B cell (primary cell): ENCODE measurements at regions of chr14 and their contacts with region 1.

Region 1: GRCh38 chr14:68359837-68360552 is 432.9 kb downstream of the ZFP36L1 start:
- DNase-seq: peak; percentile 35
- ATAC-seq: no peak
- H3K4me3 ChIP-seq: peak overlapping the region in 1 of 5 experiments; percentile 6
- H3K4me3 Mint-ChIP-seq: peak overlapping the region; percentile 72
- H3K27ac ChIP-seq: peak overlapping the region; percentile 66 to 71
- H3K27ac Mint-ChIP-seq: peak overlapping the region; percentile 95
- H3K4me1 ChIP-seq: peaks cover 56 to 62% of the 10 kb centered on the region in 2 donors
- H3K4me1 Mint-ChIP-seq: peaks cover 66% of the 10 kb centered on the region
- H3K27me3 ChIP-seq: no peaks in the 10 kb centered on the region
- H3K27me3 Mint-ChIP-seq: no peaks in the 10 kb centered on the region
- CTCF ChIP-seq: no peak

Region 2: GRCh38 chr14:68274725-68275124 is 85.3 kb before region 1 on chr14:
- CTCF ChIA-PET with region 1: interaction called, 3 read pairs
- POLR2A ChIA-PET with region 1: interaction called, 11 read pairs
- intact Hi-C with region 1: loop called (anchors 5 kb)
- DNase-seq: peak; percentile 55
- ATAC-seq: no peak
- H3K4me3 ChIP-seq: peak overlapping the region in 1 of 5 experiments; percentile 12
- H3K4me3 Mint-ChIP-seq: peak overlapping the region; percentile 80
- H3K27ac ChIP-seq: peak overlapping the region; percentile 88 to 91
- H3K27ac Mint-ChIP-seq: peak overlapping the region; percentile 98
- H3K4me1 ChIP-seq: peaks cover 92 to 93% of the 10 kb centered on the region in 2 donors
- H3K4me1 Mint-ChIP-seq: peaks cover 87% of the 10 kb centered on the region
- H3K27me3 ChIP-seq: no peaks in the 10 kb centered on the region
- H3K27me3 Mint-ChIP-seq: no peaks in the 10 kb centered on the region
- CTCF ChIP-seq: peak; percentile 33